Activated CD4-positive, alpha-beta memory T cell treated with anti-CD3 and anti-CD28 coated beads for 36 hours (primary cell): ENCODE measurements at regions of chr1 and their contacts with region 1.

Region 1: GRCh38 chr1:203038891-203039608 is 12.8 kb downstream of the PPFIA4 start:
- DNase-seq: peak; percentile 73
- H3K4me3 Mint-ChIP-seq: no peak overlapping the region
- H3K27ac Mint-ChIP-seq: no peak overlapping the region
- H3K4me1 Mint-ChIP-seq: no peaks in the 10 kb centered on the region
- H3K27me3 Mint-ChIP-seq: peaks cover 6% of the 10 kb centered on the region

Region 2: GRCh38 chr1:203051841-203052324 is 12.8 kb after region 1 on chr1:
- CTCF ChIA-PET with region 1: interaction called, 30 read pairs
- POLR2A ChIA-PET with region 1: no interaction called
- intact Hi-C with region 1: no loop called
- DNase-seq: no peak
- H3K4me3 Mint-ChIP-seq: no peak overlapping the region
- H3K27ac Mint-ChIP-seq: no peak overlapping the region
- H3K4me1 Mint-ChIP-seq: no peaks in the 10 kb centered on the region
- H3K27me3 Mint-ChIP-seq: peaks cover 8% of the 10 kb centered on the region

Region 3: DNA sequence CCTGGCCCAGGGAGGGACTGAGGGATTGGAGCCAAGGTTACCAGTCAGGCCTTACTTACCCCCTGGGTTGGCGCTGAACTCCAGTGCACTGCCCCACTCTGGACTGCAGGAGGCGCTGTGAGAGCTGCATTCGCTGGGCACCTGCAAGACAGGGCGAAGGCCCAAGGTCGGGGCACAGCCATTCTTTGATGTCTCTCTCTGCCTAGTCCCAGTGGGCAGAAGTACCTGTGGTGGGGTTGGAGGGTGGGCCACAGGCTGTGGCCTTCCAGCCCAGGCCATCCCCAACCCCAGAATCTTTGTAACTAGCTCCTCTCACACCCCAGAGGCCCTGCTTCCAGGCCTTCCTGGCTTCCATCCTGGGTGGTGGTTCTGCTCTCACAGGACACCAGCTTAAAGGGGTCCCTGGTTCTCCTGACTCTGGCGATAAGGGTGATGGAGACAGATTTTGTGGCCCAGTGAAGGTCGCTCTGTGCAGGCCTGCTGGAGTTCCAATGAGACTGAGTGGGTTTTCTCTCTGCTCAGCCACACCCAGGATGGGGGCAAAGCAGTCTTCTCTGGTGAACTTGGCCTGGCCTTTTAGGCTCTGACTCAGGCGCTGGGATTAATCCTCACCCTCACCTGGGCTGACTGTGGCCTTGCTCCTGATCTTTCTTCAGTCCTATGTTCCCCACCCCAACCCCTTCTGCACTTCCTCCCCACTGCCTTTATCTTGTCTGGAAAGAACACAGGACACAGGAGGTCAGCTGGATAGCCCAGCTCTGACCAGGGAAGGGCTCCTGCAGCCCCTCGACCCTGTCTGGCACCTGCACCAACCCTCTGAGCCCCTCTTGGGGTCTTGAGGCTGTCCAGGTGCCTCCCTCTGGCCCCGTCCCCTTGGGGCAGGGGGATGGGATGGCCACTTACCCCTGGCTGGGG is 45.8 kb after region 1 on chr1:
- CTCF ChIA-PET with region 1: interaction called, 15 read pairs
- POLR2A ChIA-PET with region 1: no interaction called
- intact Hi-C with region 1: no loop called
- DNase-seq: peak; percentile 56
- H3K4me3 Mint-ChIP-seq: no peak overlapping the region
- H3K27ac Mint-ChIP-seq: no peak overlapping the region
- H3K4me1 Mint-ChIP-seq: no peaks in the 10 kb centered on the region
- H3K27me3 Mint-ChIP-seq: peaks cover 13% of the 10 kb centered on the region

Region 4: GRCh38 chr1:203197625-203198024 is 158.6 kb after region 1 on chr1:
- CTCF ChIA-PET with region 1: interaction called, 14 read pairs
- POLR2A ChIA-PET with region 1: no interaction called
- intact Hi-C with region 1: no loop called
- DNase-seq: no peak
- H3K4me3 Mint-ChIP-seq: no peak overlapping the region
- H3K27ac Mint-ChIP-seq: no peak overlapping the region
- H3K4me1 Mint-ChIP-seq: no peaks in the 10 kb centered on the region
- H3K27me3 Mint-ChIP-seq: peaks cover 12% of the 10 kb centered on the region

Region 5: DNA sequence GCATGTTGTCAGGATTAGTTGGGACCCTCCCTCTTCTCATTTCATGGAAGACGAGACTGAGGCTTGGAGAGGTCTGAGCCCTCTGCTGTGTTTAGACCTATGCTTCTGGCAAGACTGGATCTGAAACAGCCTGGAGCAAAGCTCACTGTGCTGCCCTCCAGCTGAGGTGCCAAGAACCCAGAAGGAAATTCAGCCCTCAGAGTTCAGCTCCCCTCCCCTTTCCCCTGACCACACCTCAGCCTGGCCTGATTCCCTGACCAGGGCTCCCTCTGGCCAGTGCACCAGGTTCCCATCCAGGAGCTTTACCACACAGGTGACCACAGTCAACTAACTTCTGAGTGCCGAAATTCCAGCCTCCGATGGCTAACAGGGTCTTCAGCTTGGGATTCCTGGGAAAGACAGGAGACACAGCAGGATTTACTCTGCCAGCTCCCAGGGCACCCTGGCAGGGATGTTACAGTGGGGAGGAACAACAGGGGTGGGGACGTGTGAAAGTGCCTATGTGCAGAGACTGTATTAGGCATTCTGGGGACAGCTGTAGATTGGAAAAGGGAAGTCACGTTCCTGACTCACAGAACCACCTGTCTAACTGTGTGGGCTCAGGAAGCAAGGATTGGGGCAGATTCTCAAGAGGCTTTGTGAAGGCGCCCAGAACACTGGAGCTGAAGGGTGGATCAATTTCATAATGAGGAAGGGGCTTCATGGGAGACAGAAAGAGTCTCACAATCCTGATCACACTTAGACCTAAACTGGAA is 185.8 kb after region 1 on chr1:
- CTCF ChIA-PET with region 1: interaction called, 248 read pairs
- POLR2A ChIA-PET with region 1: no interaction called
- intact Hi-C with region 1: no loop called
- DNase-seq: no peak
- H3K4me3 Mint-ChIP-seq: no peak overlapping the region
- H3K27ac Mint-ChIP-seq: no peak overlapping the region
- H3K4me1 Mint-ChIP-seq: no peaks in the 10 kb centered on the region
- H3K27me3 Mint-ChIP-seq: peaks cover 5% of the 10 kb centered on the region